ENCODE measurements at regions of chr3 and their contacts with region 1.

Region 1: GRCh38 chr3:129650256-129650872 is 43.9 kb upstream of the PLXND1 start:
- DNase-seq: peak in 9 of 10 donors; percentile 53 to 89 (median 63)
- H3K4me3 ChIP-seq: no peak overlapping the region
- H3K27ac ChIP-seq: peak overlapping the region in 16 of 59 donors; percentile 0 to 76 (median 50)
- H3K27me3 ChIP-seq: no peaks in the 10 kb centered on the region
- CTCF ChIP-seq: peak; percentile 27 to 95 (median 83)

Region 2: GRCh38 chr3:129534428-129535027 is 115.8 kb before region 1 on chr3:
- intact Hi-C with region 1: no loop called
- DNase-seq: no peak
- H3K4me3 ChIP-seq: no peak overlapping the region
- H3K27ac ChIP-seq: no peak overlapping the region
- H3K27me3 ChIP-seq: no peaks in the 10 kb centered on the region
- CTCF ChIP-seq: no peak

Region 3: GRCh38 chr3:129633751-129634392 is 16.5 kb before region 1 on chr3:
- intact Hi-C with region 1: loop called (anchors 2 kb)
- DNase-seq: no peak
- H3K4me3 ChIP-seq: no peak overlapping the region
- H3K27ac ChIP-seq: no peak overlapping the region
- H3K27me3 ChIP-seq: no peaks in the 10 kb centered on the region
- CTCF ChIP-seq: no peak

Region 4: DNA sequence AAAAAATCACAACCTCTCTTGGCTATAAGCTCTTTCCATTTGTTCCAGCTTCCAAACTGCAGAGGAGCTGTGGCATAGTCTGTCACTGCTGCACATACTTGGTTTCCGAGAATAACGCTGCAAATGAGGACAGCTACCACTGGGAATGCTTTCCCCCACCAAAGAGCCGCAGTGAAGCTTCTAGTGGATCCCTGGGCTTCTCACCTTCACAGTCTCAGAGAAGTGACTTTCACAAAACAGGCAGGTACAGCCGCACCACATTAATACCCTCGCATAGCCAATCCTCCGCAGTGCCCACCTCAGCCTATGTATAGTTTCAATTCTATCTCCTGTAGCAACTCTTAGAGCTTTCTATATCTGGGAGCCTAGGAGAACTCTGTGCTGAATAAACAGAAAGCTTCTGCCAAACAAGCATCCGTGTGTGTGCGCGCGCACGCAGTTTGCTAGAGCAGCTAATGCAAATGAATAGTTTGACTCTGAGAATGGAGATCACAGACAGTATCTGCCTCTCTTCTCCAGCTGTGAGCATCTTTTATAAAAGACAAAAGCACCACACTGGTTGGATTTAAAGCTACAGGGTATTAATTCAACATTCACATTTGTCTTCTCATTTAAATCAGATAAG is 38.0 kb after region 1 on chr3:
- intact Hi-C with region 1: loop called in 1 of 2 experiments (anchors 5 kb)
- DNase-seq: peak; percentile 84 to 97 (median 93)
- H3K4me3 ChIP-seq: peak overlapping the region; percentile 35 to 73 (median 59)
- H3K27ac ChIP-seq: peak overlapping the region; percentile 73 to 97 (median 94)
- H3K27me3 ChIP-seq: no peaks in the 10 kb centered on the region
- CTCF ChIP-seq: peak in 13 of 56 donors; percentile 6 to 22 (median 11)

Region 5: DNA sequence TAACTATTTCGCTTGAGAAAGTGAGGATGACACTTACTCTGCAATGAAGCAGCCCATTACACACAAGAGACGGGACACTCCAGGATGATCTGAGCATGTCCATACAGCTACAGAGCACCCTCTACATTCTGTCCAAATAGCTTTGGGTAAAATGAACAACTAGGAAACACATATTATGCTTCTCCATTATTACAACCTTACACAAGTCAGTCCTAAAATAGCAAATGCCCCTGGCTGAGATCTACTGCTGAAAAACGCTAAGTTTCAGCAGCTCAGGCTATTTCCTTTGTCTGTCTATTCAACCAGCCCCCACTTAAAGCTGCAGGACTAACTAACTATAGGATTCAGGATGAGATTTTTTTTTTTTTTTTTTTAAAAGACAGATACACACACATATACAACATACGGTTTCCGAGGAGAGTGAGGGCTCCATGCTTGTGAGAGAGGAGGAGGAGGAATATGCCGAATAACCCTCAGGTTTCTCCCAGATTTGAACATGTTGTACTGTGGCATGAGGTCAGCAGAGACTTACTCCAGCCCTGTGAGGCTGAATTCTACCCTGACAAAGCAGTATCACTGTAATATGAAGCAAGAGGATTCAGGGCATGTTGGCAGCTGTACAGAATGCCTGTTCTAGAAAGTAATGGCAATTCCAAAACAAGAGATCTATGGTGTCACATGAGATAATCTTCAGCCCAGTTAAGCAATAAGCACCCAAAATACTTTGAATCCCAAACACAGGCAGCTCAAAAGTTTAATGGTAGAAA is 73.4 kb after region 1 on chr3:
- intact Hi-C with region 1: loop called in 1 of 2 experiments (anchors 10 kb)
- DNase-seq: no peak
- H3K4me3 ChIP-seq: peak overlapping the region in 9 of 59 donors; percentile 6 to 37 (median 16)
- H3K27ac ChIP-seq: peak overlapping the region in 34 of 59 donors; percentile 1 to 70 (median 30)
- H3K27me3 ChIP-seq: no peaks in the 10 kb centered on the region
- CTCF ChIP-seq: no peak

Region 6: GRCh38 chr3:129934234-129935123 is 284.1 kb after region 1 on chr3:
- intact Hi-C with region 1: loop called in 1 of 2 experiments (anchors 1 kb)
- DNase-seq: peak in 5 of 10 donors; percentile 28 to 64 (median 39)
- H3K4me3 ChIP-seq: peak overlapping the region in 47 of 59 donors; percentile 4 to 56 (median 35)
- H3K27ac ChIP-seq: peak overlapping the region in 1 of 59 donors; percentile 3
- H3K27me3 ChIP-seq: no peaks in the 10 kb centered on the region
- CTCF ChIP-seq: peak; percentile 83 to 98 (median 95)

Measured in dorsolateral prefrontal cortex (tissue), 120 donors.